ENCODE measurements at regions of chr3 and their contacts with region 1.

Region 1: GRCh38 chr3:149273096-149273751 is 51.6 kb upstream of the CP start:
- DNase-seq: peak; percentile 44
- CTCF ChIP-seq: peak; percentile 87

Region 2: DNA sequence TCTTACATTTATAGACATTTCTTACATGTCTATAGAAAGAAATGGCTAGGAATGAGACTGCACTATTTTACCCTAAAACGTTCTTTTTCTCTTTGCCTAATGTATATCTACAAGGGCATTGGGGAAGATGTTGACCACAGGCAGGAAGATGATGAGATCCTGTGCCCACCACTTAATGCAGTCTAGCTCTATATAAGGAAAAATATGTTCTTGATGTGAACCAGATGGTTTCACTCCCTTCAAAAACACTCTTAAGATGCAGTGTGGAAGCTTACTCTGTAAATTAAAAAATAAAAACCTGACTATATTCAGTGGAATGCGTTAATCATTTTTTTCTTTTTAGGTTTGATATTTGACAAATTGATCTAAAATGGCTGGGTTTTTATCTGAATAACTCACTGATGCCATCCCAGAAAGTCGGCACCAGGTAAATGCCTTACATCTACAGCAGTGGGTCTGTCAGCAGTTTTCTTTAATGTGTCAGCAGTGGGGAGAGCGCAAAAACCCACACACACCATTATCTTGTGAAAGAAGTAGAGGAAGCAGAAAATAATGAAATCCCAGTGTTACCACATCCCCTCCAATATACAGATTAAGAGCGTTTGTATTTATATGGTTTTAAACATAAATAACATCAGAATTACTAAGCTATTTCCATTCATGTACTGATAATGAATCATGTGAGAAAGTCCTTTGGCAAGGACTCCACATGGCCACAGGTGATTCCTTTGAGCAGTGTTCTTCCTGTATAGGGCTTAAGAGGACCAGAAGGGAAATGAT is 565.4 kb before region 1 on chr3:
- in situ Hi-C with region 1: no loop called
- DNase-seq: no peak
- CTCF ChIP-seq: no peak

Region 3: GRCh38 chr3:148861277-148861869 is 411.9 kb before region 1 on chr3:
- in situ Hi-C with region 1: loop called (anchors 25 kb)
- DNase-seq: peak; percentile 50
- CTCF ChIP-seq: peak; percentile 57

Region 4: DNA sequence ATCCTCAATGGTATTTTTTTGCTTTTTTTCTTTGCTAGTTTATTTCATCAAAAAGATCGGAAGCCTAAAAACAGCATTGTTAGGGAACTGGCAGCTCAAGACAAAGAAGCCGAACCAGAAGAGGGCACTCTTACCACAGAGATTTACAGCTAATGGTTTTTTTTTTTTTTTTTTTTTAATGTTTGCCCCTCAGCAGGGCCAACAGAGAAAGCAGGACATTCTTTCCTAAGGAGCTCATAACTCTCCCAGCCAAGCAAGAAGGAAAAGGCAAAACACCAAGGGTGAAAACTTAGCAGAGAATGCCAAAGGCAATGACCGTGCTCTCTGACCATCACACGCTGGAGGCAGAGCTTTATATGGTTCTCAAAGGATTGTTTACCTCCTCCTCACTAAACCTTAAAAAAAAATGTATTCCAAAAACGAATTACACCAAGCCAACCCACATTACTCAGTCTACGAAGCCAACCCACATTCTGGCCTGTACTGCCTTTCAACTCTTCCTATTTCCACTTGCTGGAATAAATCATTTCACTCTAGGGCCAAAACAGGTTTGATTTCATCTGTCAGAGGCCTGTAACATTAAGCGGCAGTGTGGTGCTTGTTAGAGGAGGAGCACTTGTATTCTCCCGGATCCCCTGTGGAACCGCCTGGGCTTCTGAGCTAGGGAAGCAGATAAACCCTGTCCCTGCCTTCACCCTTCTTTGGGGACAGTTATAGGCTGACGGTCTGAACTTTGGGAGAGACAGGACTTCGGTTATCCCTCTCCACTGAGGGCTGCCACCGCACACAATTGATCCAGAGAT is 317.5 kb before region 1 on chr3:
- in situ Hi-C with region 1: loop called (anchors 10 kb)
- DNase-seq: peak; percentile 18
- CTCF ChIP-seq: peak; percentile 35

Region 5: GRCh38 chr3:149115114-149115513 is 158.1 kb before region 1 on chr3:
- in situ Hi-C with region 1: loop called (anchors 5 kb)
- DNase-seq: no peak
- CTCF ChIP-seq: no peak